Activated naive CD4-positive, alpha-beta T cell treated with anti-CD3 and anti-CD28 coated beads for 36 hours (primary cell): ENCODE measurements at regions of chr2 and their contacts with region 1.

Region 1: DNA sequence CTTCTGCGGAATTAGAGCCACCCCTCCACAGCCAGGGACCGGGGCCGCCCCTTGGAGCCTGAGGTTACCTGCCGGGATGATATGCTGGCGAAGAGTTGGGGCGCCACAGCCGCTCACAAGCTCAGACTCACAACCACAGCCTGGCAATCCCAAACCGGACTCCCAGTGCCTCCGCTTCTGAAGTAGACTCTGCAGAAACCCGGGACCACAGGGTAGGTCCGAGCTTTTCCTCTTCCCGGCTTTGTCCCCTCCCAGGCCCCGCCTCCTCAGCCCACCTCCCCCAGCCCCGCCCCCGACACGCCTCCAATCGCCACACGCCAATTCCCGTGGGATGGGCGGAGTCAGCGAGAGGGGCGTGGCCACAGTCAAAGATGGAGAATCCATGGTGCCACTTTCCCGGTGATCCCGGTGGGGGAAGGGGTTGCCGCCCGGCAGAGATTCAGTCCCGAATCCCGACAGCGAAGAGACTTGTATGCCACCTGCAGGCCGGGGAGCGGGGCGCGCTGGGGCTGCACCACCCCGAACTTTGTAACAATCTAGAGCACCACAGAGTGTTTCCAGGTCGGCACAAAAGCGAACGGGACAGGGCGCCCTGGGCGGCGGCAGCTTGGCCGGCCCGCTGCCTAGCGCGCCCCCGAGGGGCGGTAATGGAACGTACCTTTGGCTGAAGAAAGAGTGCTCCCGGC is at the start of gene IDH1:
- DNase-seq: peak; percentile 96
- H3K4me3 Mint-ChIP-seq: peak within 1 kb of the TSS; percentile 86
- H3K27ac Mint-ChIP-seq: peak within 1 kb of the TSS; percentile 55
- H3K4me1 Mint-ChIP-seq: peaks cover 18% of the 10 kb centered on the region
- H3K27me3 Mint-ChIP-seq: no peaks in the 10 kb centered on the region
- total RNA-seq, gene IDH1: 18.5 to 21.9 TPM

Region 2: GRCh38 chr2:207710814-207711740 is 543.9 kb before region 1 on chr2 and contains the start of gene CCNYL1:
- CTCF ChIA-PET with region 1: no interaction called
- intact Hi-C with region 1: loop called (anchors 2 kb)
- DNase-seq: peak; percentile 98
- H3K4me3 Mint-ChIP-seq: peak within 1 kb of the TSS; percentile 88
- H3K27ac Mint-ChIP-seq: peak within 1 kb of the TSS; percentile 56
- H3K4me1 Mint-ChIP-seq: peaks cover 26% of the 10 kb centered on the region
- H3K27me3 Mint-ChIP-seq: no peaks in the 10 kb centered on the region
- total RNA-seq, gene CCNYL1: 2.5 to 2.7 TPM

Region 3: GRCh38 chr2:208025037-208025813 is 229.8 kb before region 1 on chr2 and contains the start of gene PLEKHM3:
- CTCF ChIA-PET with region 1: no interaction called
- intact Hi-C with region 1: loop called (anchors 2 kb)
- DNase-seq: peak; percentile 81
- H3K4me3 Mint-ChIP-seq: peak within 1 kb of the TSS; percentile 93
- H3K27ac Mint-ChIP-seq: peak within 1 kb of the TSS; percentile 88
- H3K4me1 Mint-ChIP-seq: peaks cover 14% of the 10 kb centered on the region
- H3K27me3 Mint-ChIP-seq: no peaks in the 10 kb centered on the region
- total RNA-seq, gene PLEKHM3: 6.5 to 7.0 TPM

Region 4: DNA sequence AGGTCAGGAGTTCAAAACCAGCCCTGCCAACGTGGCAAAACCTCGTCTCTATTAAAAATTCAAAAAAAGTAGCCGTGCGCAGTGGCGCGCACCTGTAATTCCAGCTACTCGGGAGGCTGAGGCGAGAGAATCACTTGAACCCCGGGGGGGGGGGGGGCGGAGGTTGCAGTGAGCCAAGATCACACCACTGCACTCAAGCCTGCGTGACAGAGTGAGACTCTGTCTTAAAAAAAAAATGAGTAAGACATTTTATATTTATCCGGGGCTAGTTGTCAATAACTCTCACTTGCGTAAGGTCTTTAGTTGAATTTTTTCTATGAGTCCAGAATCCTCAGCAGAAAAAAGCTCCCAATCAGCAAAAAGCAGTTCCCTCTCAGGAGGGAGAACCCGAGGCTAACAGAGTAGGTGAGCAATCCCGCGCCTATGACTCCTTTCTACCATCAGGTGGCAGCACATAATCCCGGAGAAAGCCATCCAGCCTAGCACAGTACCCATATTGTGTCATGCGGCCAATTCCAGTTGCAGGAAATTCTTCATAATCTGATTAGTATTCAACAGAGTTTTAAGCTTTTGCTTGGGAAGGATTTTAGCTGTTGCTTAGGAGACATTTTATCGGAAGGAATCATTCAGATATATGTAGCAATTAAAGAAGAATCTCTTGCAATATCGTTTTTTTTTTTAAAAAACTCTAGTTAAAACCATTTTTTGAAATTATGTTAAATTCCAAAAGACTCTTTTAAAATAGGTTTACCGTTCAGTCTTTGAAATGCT is 79.8 kb before region 1 on chr2:
- CTCF ChIA-PET with region 1: interaction called, 15 read pairs
- intact Hi-C with region 1: loop called (anchors 1 kb)
- DNase-seq: peak; percentile 80
- H3K4me3 Mint-ChIP-seq: no peak overlapping the region
- H3K27ac Mint-ChIP-seq: no peak overlapping the region
- H3K4me1 Mint-ChIP-seq: peaks cover 2% of the 10 kb centered on the region
- H3K27me3 Mint-ChIP-seq: peaks cover 11% of the 10 kb centered on the region

Region 5: DNA sequence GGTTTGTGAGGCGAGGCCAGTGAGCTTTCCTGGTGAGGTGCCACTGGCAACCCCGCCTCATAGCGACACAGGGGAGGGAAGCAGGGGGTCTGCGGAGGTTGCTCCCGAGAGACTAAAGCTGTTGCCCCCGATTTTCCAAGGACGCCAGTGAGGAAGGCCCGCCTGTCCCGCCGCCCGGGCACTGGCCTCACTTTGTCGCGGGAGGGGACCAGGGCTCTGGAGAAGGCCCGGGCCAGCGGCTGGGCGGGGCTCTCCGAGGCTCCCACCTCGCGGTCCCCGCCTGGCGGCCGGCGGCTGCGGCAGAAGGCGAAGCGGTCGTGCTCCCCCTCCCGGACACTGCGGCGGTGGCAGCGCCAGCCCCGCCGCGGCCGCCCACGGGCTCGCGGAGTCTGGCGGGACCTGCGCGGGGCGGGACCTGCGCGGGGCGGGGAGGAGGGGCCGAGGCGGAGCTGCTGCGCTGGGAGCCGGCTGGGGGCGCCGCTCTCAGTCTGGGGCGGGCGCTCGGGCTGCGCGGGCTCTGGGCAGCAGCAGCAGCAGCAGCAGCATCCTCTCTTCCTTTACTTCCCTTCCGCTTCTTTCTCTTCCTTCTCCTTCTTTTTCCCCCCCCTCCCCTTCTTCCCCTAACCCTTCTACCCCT is 1168.7 kb after region 1 on chr2 and contains the start of gene MAP2:
- CTCF ChIA-PET with region 1: no interaction called
- intact Hi-C with region 1: loop called (anchors 10 kb)
- DNase-seq: peak; percentile 74
- H3K4me3 Mint-ChIP-seq: peak within 1 kb of the TSS; percentile 73
- H3K27ac Mint-ChIP-seq: no peak within 1 kb of the TSS
- H3K4me1 Mint-ChIP-seq: peaks cover 12% of the 10 kb centered on the region
- H3K27me3 Mint-ChIP-seq: peaks cover 42% of the 10 kb centered on the region
- total RNA-seq, gene MAP2: 0.20 to 0.67 TPM